GM12878 (cell line): ENCODE measurements at regions of chr3 and their contacts with region 1.

Region 1: GRCh38 chr3:196198771-196199753 is 12.1 kb downstream of the ZDHHC19 start:
- DNase-seq: no peak
- ATAC-seq: no peak
- H3K4me3 ChIP-seq: no peak overlapping the region
- H3K27ac ChIP-seq: no peak overlapping the region
- H3K4me1 ChIP-seq: peaks cover 21% of the 10 kb centered on the region
- H3K27me3 ChIP-seq: no peaks in the 10 kb centered on the region
- CTCF ChIP-seq: peak in 2 of 3 experiments; percentile 18 to 25; a peak in 3 of 6 replicates
- EP300 ChIP-seq: no peak
- POLR2A ChIP-seq: no peak
- RAD21 ChIP-seq: peak; percentile 28; the same call in 1 of the 2 replicates

Region 2: GRCh38 chr3:196016485-196016884 is 182.6 kb before region 1 on chr3:
- CTCF ChIA-PET with region 1: interaction called, 82 read pairs
- POLR2A ChIA-PET with region 1: interaction called, 5 read pairs
- RAD21 ChIA-PET with region 1: interaction called, 3 read pairs
- SMC1A ChIA-PET with region 1: interaction called, 8 read pairs
- in situ Hi-C with region 1: no loop called
- intact Hi-C with region 1: no loop called
- DNase-seq: no peak
- ATAC-seq: no peak
- H3K4me3 ChIP-seq: no peak overlapping the region
- H3K27ac ChIP-seq: no peak overlapping the region
- H3K4me1 ChIP-seq: no peaks in the 10 kb centered on the region
- H3K27me3 ChIP-seq: no peaks in the 10 kb centered on the region
- CTCF ChIP-seq: no peak
- EP300 ChIP-seq: no peak
- POLR2A ChIP-seq: no peak
- RAD21 ChIP-seq: no peak

Region 3: DNA sequence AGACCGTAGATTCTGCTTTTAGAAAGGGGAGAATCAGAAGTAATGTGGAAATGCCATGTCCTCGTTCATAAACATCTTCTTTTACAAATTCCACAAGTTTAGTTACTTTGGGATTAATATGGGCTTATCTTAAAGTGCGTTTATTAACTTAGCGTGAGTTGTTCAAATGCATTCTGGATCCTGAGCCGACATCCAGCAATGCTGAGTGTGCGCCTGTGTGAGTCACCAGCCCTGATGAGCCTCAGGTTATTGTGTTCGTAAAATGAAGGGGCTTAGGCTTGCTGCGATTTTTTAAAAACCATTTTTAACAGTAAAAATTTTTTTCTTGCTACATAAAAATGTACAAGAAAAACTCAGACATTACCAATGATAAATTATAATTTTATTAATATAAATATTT is 175.1 kb before region 1 on chr3:
- CTCF ChIA-PET with region 1: interaction called, 82 read pairs
- POLR2A ChIA-PET with region 1: no interaction called
- RAD21 ChIA-PET with region 1: interaction called, 13 read pairs
- SMC1A ChIA-PET with region 1: interaction called, 10 read pairs
- in situ Hi-C with region 1: no loop called
- intact Hi-C with region 1: loop called (anchors 1 kb)
- DNase-seq: no peak
- ATAC-seq: no peak
- H3K4me3 ChIP-seq: no peak overlapping the region
- H3K27ac ChIP-seq: no peak overlapping the region
- H3K4me1 ChIP-seq: no peaks in the 10 kb centered on the region
- H3K27me3 ChIP-seq: no peaks in the 10 kb centered on the region; a peak in 1 of 4 replicates
- CTCF ChIP-seq: no peak
- EP300 ChIP-seq: no peak
- POLR2A ChIP-seq: no peak
- RAD21 ChIP-seq: no peak

Region 4: DNA sequence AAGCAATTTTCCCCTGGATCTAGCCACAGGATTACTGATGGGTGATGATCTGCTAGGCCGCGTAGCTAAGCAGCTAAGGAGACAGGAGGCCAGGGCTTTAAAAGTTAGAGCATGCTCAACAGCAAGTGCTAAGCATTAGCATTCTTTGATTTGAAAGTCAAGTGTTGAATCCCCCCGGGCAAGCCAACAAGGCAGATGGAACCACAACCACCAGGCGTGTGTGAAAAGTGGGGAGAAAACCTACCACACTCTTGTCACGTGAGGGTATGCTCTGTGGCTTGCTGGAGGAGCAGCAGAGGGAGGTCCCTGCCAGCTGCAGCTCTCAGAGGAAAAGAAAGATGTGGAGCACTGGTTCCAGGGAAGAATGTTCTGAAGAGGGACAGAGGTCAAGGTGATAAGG is 38.1 kb after region 1 on chr3:
- CTCF ChIA-PET with region 1: no interaction called
- POLR2A ChIA-PET with region 1: no interaction called
- RAD21 ChIA-PET with region 1: no interaction called
- SMC1A ChIA-PET with region 1: no interaction called
- in situ Hi-C with region 1: no loop called
- intact Hi-C with region 1: no loop called
- DNase-seq: no peak
- ATAC-seq: no peak
- H3K4me3 ChIP-seq: no peak overlapping the region
- H3K27ac ChIP-seq: peak overlapping the region; percentile 20; the same call in 1 of the 2 replicates
- H3K4me1 ChIP-seq: peaks cover 25% of the 10 kb centered on the region
- H3K27me3 ChIP-seq: no peaks in the 10 kb centered on the region
- CTCF ChIP-seq: no peak
- EP300 ChIP-seq: no peak
- POLR2A ChIP-seq: no peak
- RAD21 ChIP-seq: no peak

Region 5: DNA sequence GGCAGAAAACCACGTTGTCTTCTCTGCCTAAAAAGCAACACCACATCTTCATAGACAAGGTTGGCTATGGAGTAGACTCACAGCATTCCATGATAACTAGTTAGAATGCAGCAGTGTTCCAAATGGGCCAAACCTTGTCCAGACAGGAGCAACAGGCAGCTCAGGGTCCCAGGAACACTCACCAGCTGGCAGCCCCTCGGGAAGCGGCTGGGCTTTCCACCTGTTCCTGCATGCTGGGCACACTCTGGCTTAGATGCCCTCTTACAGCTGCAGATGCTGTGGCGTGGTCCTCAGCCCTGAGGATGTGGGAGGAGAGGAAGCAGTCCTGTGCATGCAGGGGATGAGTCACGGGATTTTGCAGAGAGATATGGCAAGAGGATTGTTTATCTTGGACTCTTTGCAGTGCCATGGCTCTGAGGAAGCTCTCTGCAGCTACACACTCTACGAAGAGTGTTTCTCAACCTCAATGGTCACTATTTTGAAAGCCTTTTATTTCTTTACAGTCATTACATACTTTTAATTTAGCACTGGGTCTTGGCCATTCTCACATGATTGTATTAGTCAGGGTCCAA is 451.8 kb after region 1 on chr3:
- CTCF ChIA-PET with region 1: no interaction called
- POLR2A ChIA-PET with region 1: no interaction called
- RAD21 ChIA-PET with region 1: no interaction called
- SMC1A ChIA-PET with region 1: no interaction called
- in situ Hi-C with region 1: no loop called
- intact Hi-C with region 1: no loop called
- DNase-seq: no peak
- ATAC-seq: no peak
- H3K4me3 ChIP-seq: no peak overlapping the region
- H3K27ac ChIP-seq: no peak overlapping the region
- H3K4me1 ChIP-seq: peaks cover 15% of the 10 kb centered on the region
- H3K27me3 ChIP-seq: no peaks in the 10 kb centered on the region
- CTCF ChIP-seq: no peak
- EP300 ChIP-seq: no peak
- POLR2A ChIP-seq: no peak
- RAD21 ChIP-seq: no peak